GM12878 (cell line): ENCODE measurements at regions of chr5 and their contacts with region 1.

Region 1: GRCh38 chr5:43040287-43041098 is at the start of gene ANXA2R:
- DNase-seq: no peak
- ATAC-seq: peak; percentile 60
- H3K4me3 ChIP-seq: peak within 1 kb of the TSS; percentile 66
- H3K27ac ChIP-seq: peak within 1 kb of the TSS; percentile 82
- H3K4me1 ChIP-seq: peaks cover 20% of the 10 kb centered on the region
- H3K27me3 ChIP-seq: no peaks in the 10 kb centered on the region
- CTCF ChIP-seq: peak; percentile 83 to 95 (median 92)
- EP300 ChIP-seq: no peak
- POLR2A ChIP-seq: peak; percentile 27; the same call in 1 of the 2 replicates
- RAD21 ChIP-seq: peak; percentile 92
- polyA plus RNA-seq, gene ANXA2R: 3.2 to 4.5 TPM

Region 2: GRCh38 chr5:42950440-42951292 is 89.8 kb before region 1 on chr5:
- CTCF ChIA-PET with region 1: interaction called, 10 read pairs
- POLR2A ChIA-PET with region 1: interaction called, 7 read pairs
- RAD21 ChIA-PET with region 1: interaction called, 16 read pairs
- SMC1A ChIA-PET with region 1: interaction called, 5 read pairs
- in situ Hi-C with region 1: loop called (anchors 5 kb)
- intact Hi-C with region 1: loop called (anchors 1 kb)
- DNase-seq: peak; percentile 32
- ATAC-seq: peak; percentile 48
- H3K4me3 ChIP-seq: peak overlapping the region; percentile 62
- H3K27ac ChIP-seq: peak overlapping the region; percentile 51
- H3K4me1 ChIP-seq: peaks cover 13% of the 10 kb centered on the region
- H3K27me3 ChIP-seq: no peaks in the 10 kb centered on the region; a peak in 1 of 4 replicates
- CTCF ChIP-seq: no peak
- EP300 ChIP-seq: no peak
- POLR2A ChIP-seq: no peak; the same call in 1 of the 2 replicates
- RAD21 ChIP-seq: no peak

Region 3: DNA sequence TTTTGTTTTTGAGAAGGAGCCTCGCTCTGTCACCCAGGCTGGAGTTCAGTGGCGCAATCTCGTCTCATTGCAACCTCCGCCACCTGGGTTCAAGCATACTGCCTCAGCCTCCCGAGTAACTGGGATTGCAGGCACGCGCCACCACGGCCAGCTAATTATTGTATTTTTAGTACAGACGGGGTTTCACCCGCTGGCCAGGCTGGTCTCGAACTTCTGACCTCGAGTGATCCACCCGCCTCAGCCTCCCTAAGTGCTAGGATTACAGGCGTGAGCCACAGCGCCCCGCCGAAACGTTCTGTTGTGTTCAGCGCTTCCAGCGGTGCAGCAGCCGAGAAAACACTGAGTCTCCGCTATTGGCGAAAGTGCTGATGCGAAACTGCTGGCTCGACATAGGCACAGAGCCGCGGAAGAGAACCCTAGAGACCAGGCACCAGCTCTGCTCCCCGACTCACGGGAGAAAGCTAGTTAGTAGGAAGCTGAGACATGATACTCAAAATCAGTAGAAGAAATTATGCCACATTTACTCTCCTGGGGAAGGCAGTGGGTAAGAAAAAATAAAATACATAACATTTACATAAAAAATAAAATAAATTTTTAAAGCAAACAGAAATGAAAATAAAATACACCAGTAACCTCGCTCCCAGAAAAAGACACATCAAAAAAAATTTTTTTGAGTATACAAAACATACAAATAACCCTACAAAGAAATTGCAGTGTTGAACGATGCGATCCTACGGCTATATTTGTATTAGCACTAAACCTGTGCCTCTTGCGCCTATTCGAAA is 31.9 kb before region 1 on chr5:
- CTCF ChIA-PET with region 1: interaction called, 25 read pairs
- POLR2A ChIA-PET with region 1: interaction called, 25 read pairs
- RAD21 ChIA-PET with region 1: interaction called, 19 read pairs
- SMC1A ChIA-PET with region 1: interaction called, 15 read pairs
- in situ Hi-C with region 1: no loop called
- intact Hi-C with region 1: loop called (anchors 1 kb)
- DNase-seq: no peak
- ATAC-seq: peak; percentile 72
- H3K4me3 ChIP-seq: peak overlapping the region; percentile 67
- H3K27ac ChIP-seq: peak overlapping the region; percentile 94
- H3K4me1 ChIP-seq: peaks cover 13% of the 10 kb centered on the region
- H3K27me3 ChIP-seq: no peaks in the 10 kb centered on the region
- CTCF ChIP-seq: peak in 2 of 3 experiments; percentile 5 to 13; a peak in 2 of 6 replicates
- EP300 ChIP-seq: peak in 1 of 2 experiments; percentile 77; a peak in 2 of 4 replicates
- POLR2A ChIP-seq: no peak
- RAD21 ChIP-seq: no peak

Region 4: DNA sequence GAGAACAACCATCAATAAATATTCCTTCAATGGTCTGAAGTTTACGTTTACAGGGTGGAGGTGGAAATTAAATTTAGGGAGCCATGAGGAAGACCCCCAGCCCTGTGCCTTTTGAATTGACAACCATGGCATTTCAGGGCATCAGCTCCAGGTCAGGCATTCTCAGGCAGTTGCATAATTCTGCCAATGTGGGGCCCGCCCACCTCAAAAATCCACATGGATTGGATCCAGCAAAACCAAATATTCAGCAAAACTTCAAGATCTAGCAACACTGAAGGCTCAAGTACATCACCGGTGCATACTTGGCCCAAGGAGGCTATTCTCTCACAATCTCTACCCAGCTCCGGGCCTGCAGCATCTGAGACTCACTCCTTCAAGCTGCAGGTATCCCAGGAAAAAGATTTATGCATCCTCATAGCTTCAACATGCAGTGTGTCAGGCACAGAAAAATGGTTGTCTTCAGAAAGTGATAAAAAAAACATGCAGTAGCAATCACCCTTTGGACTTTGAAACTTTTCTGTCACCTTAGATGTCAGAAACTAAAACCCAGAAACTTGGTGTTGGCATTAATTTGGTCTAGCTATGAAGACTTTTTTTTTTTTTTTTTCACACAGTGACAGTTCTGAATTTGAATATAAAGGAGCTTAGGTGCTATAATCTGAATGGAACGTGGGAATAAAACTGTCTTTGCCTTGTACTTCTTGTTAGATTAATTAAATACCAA is 21.0 kb after region 1 on chr5:
- CTCF ChIA-PET with region 1: interaction called, 25 read pairs
- POLR2A ChIA-PET with region 1: interaction called, 5 read pairs
- RAD21 ChIA-PET with region 1: interaction called, 9 read pairs
- SMC1A ChIA-PET with region 1: interaction called, 18 read pairs
- in situ Hi-C with region 1: no loop called
- intact Hi-C with region 1: loop called (anchors 1 kb)
- DNase-seq: no peak
- ATAC-seq: no peak
- H3K4me3 ChIP-seq: no peak overlapping the region
- H3K27ac ChIP-seq: no peak overlapping the region
- H3K4me1 ChIP-seq: no peaks in the 10 kb centered on the region
- H3K27me3 ChIP-seq: no peaks in the 10 kb centered on the region
- CTCF ChIP-seq: no peak
- EP300 ChIP-seq: no peak
- POLR2A ChIP-seq: no peak
- RAD21 ChIP-seq: no peak

Region 5: GRCh38 chr5:43105369-43106289 is 65.1 kb after region 1 on chr5:
- CTCF ChIA-PET with region 1: interaction called, 7 read pairs
- POLR2A ChIA-PET with region 1: no interaction called
- RAD21 ChIA-PET with region 1: interaction called, 4 read pairs
- SMC1A ChIA-PET with region 1: interaction called, 4 read pairs
- in situ Hi-C with region 1: no loop called
- intact Hi-C with region 1: loop called (anchors 2 kb)
- DNase-seq: peak; percentile 79
- ATAC-seq: peak; percentile 99
- H3K4me3 ChIP-seq: peak overlapping the region; percentile 73
- H3K27ac ChIP-seq: peak overlapping the region; percentile 55
- H3K4me1 ChIP-seq: peaks cover 5% of the 10 kb centered on the region
- H3K27me3 ChIP-seq: no peaks in the 10 kb centered on the region
- CTCF ChIP-seq: peak; percentile 100
- EP300 ChIP-seq: no peak
- POLR2A ChIP-seq: peak; percentile 26; the same call in 1 of the 2 replicates
- RAD21 ChIP-seq: peak; percentile 93

Region 6: GRCh38 chr5:43182401-43182800 is 141.9 kb after region 1 on chr5:
- CTCF ChIA-PET with region 1: no interaction called
- POLR2A ChIA-PET with region 1: no interaction called
- RAD21 ChIA-PET with region 1: no interaction called
- SMC1A ChIA-PET with region 1: no interaction called
- in situ Hi-C with region 1: no loop called
- intact Hi-C with region 1: no loop called
- DNase-seq: no peak
- ATAC-seq: no peak
- H3K4me3 ChIP-seq: no peak overlapping the region
- H3K27ac ChIP-seq: no peak overlapping the region
- H3K4me1 ChIP-seq: no peaks in the 10 kb centered on the region
- H3K27me3 ChIP-seq: no peaks in the 10 kb centered on the region
- CTCF ChIP-seq: no peak
- EP300 ChIP-seq: no peak
- POLR2A ChIP-seq: no peak
- RAD21 ChIP-seq: no peak